Lower leg skin (tissue), 4 donors: ENCODE measurements at regions of chr16 and their contacts with region 1.

Region 1: DNA sequence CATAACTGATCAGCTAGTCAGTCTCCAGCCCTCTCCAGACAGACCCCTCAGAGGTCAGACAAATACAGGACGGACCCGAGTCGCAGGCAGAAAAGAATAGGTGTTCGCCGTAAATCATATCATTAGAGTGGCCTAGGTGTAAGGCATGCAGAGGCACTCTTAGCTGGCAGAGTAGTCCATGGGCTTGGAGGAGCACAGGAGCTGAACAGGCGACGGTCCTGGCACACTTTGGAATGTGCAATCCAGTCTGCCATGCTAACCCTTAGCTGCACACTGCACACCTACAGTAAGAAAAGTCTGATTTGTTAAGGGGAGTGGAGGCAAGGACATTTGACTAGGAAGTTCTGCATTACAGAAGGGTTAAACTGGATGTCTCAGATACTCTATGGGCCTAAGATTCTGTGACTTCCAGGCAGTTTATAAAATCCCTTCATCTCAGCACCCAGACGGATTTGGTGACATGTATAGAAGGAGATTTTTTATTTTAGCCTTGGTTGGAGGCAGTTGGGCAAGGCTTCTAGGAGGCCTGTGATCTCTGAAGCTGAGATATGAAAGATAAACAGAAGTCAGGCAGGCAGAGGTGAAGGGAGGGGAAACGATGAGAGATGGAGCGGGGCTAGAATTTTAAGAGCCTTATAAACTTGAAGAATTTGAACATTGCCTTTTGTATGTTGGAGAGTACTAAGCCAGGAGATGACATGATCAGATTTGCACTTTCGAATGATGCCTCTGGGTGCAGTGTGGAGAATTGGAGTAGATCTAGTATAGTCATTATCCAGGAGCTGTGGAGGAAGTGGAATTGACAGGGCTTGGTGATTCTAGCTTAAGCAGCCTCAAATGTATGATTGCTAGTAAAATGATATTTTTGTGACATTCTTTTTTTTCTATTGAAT is 34.6 kb upstream of the SLC5A11 start:
- DNase-seq: no peak
- H3K4me3 ChIP-seq: no peak overlapping the region
- CTCF ChIP-seq: no peak
- POLR2A ChIP-seq: no peak

Region 2: GRCh38 chr16:26275021-26275590 is 1463.9 kb after region 1 on chr16:
- intact Hi-C with region 1: loop called (anchors 5 kb)
- DNase-seq: no peak
- H3K4me3 ChIP-seq: no peak overlapping the region
- CTCF ChIP-seq: no peak
- POLR2A ChIP-seq: no peak